Dendritic cell treated with granulocyte-macrophage colony-stimulating factor and Interleukin-4, amounts not matched to agents 40 ng/mL and 50 ng/mL, for 4 days (primary cell): ENCODE measurements at regions of chr22 and their contacts with region 1.

Region 1: GRCh38 chr22:36506637-36507517 is at the start of gene FOXRED2:
- H3K4me3 Mint-ChIP-seq: peak within 1 kb of the TSS; percentile 81
- H3K27ac Mint-ChIP-seq: peak within 1 kb of the TSS; percentile 84
- H3K4me1 Mint-ChIP-seq: peaks cover 37% of the 10 kb centered on the region
- H3K27me3 Mint-ChIP-seq: no peaks in the 10 kb centered on the region

Region 2: DNA sequence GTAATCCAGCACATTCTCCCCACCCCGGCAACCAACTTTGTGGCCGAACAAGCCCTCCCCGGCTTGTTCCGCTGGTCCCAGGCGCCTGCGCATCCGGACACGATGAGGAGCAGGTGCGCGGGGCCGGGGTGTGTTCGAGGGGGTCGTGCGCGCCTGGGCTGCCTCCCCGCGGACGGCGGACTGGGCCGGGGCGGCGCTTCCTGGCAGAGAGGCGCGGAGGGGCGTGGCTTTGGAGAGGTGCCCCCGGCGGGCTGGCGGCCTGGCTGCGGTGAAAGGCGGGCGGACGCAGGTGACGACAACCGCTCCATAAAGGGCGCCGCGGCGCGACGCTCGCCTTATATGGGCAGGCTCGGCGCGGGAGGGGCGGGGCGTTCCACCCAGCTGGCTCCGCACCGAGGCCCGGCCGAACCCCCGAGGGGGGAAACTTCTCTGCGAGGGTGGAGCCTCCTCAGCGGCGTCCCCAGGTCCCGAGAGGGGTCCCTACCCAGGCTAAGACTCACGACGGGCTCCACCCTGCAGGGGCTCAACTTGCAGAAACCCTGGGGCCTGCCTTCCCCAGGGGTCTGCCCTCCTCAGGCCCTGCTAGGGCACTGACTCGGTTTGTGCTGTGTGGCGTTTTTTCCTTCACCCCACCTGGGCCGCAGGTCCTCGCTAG is 51.8 kb before region 1 on chr22:
- intact Hi-C with region 1: no loop called
- H3K4me3 Mint-ChIP-seq: peak overlapping the region; percentile 68
- H3K27ac Mint-ChIP-seq: peak overlapping the region; percentile 68
- H3K4me1 Mint-ChIP-seq: peaks cover 47% of the 10 kb centered on the region
- H3K27me3 Mint-ChIP-seq: peaks cover 2% of the 10 kb centered on the region

Region 3: DNA sequence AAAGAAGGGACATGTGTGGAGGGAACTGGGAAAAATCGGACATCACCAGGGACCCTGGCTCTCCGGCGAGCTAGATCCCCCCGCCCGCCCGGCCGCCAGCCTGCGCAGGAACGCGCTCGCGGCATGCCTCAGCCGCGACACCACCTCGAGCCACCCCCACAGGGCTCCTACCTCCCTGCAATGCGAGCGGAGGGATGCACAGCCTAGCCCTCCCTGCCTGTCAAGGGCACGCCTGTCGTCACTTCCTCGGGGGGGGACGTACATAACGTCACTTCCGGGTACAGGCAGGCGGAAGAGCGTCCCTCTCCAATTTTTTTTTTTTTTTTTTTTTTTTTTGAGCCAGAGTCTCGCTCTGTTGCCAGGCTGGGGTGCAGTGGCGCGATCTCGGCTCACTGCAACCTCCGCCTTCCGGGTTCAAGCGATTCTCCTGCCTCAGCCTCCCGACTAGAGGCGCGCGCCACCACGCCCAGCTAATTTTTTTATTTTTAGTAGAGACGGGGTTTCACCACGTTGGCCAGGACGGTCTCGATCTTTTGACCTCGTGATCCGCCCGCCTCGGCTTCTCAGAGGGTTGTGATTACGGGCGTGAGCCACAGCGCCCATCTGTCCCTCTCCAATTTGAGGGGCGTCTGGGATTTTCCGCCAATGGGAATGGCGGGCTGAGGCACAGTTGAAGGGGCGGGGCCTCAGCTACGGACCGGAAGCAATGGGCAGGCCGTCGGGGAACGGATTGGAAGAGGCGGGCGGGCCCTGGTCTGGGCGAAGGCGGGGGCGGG is 25.3 kb before region 1 on chr22 and contains the start of gene TXN2:
- intact Hi-C with region 1: loop called (anchors 2 kb)
- H3K4me3 Mint-ChIP-seq: peak within 1 kb of the TSS; percentile 80
- H3K27ac Mint-ChIP-seq: peak within 1 kb of the TSS; percentile 99
- H3K4me1 Mint-ChIP-seq: peaks cover 11% of the 10 kb centered on the region
- H3K27me3 Mint-ChIP-seq: no peaks in the 10 kb centered on the region

Region 4: GRCh38 chr22:36528795-36529751 is 22.2 kb after region 1 on chr22 and contains the start of gene EIF3D:
- intact Hi-C with region 1: loop called (anchors 1 kb)
- H3K4me3 Mint-ChIP-seq: peak within 1 kb of the TSS; percentile 86
- H3K27ac Mint-ChIP-seq: peak within 1 kb of the TSS; percentile 97
- H3K4me1 Mint-ChIP-seq: peaks cover 17% of the 10 kb centered on the region
- H3K27me3 Mint-ChIP-seq: peaks cover 2% of the 10 kb centered on the region

Region 5: DNA sequence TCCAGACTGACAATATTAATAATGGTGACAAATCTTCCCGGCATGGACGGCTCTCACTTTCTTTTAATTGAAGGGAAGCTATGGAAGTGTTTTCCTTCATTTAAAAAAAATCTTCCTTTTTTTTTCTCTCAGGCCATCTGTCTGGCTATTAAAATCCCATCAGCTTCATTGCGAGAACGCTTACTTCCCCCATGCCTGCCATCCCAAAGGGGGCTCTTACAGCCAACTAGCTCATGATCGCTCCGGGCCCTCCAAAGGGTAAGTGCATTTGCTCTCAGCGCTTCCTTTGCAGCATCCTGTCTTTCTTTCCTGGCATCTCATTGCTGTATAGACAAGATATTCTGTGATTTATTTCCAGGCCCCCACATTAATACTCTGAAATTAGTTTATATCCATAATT is 175.9 kb after region 1 on chr22:
- intact Hi-C with region 1: no loop called
- H3K4me3 Mint-ChIP-seq: no peak overlapping the region
- H3K27ac Mint-ChIP-seq: no peak overlapping the region
- H3K4me1 Mint-ChIP-seq: no peaks in the 10 kb centered on the region
- H3K27me3 Mint-ChIP-seq: peaks cover 27% of the 10 kb centered on the region

Region 6: DNA sequence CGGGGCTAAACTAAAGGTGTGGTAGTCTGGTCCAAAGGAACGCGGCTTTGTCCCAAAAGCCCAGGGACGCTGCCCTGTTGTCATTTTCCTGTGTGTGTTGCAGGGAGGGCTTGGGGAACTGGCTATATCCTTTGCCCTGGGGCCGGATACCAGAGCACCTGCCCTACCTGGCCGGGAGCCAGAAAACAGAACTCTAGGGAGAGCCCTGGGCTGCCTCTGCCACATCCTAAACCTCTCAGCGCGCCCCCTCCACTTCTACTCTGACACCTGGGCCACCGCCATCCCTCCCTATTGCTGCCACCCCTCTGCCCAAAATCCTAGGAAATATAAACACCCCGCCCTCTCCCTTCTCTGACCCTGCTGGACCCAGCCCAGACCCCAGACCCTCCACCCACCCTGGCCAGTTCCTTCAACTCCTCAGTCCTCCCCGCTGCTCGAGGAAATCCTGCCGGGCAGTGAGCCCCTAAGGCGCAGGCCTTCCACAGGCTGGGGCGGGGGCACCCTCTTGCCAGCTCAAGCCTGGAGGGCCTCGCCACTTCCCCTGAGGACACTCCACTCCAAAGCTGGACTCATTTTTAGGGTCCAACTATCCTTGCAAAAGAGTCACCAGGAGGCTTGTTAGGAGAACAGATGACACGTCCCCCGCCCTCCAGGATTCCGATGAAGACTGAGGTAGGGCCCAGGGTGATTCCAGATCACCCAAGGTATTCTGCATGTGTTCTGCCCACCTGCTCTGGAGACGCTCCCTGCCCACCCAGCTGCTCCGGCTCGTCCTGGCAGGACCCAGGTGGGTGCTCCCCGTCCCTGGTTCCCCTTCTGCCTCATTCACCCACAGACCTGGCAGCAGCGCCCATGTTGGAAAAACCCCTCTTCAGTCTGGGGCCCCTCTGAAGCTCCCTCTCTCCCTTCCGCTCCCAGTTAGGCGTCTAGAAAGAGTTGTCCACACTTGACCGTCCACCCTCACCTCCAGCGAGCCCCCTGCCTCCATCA is 556.8 kb after region 1 on chr22:
- intact Hi-C with region 1: no loop called
- H3K4me3 Mint-ChIP-seq: no peak overlapping the region
- H3K27ac Mint-ChIP-seq: no peak overlapping the region
- H3K4me1 Mint-ChIP-seq: no peaks in the 10 kb centered on the region
- H3K27me3 Mint-ChIP-seq: peaks cover 22% of the 10 kb centered on the region